Head of caudate nucleus (tissue), 42 donors: ENCODE measurements at regions of chr4 and their contacts with region 1.

Region 1: DNA sequence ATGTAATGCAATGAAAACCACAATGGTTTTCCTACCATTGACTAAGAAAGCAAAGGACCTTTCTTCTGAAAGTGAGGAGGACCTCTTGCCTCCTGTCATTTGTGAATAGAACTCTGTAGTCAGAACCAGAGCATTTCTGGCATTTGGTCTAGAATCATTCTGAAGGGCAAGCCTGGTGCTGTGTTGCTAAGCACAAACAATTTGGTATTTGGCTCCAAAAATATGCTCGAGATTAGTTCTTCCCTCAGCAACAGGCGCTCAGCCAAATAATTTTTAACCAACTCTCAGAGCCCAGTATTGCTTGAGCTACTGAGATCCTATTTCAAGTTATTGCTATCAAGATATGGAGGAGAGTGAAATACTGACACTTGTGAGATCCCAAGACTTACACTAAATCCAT is 71.0 kb downstream of the SNCA start:
- DNase-seq: peak in 2 of 42 donors; percentile 20 to 48

Region 2: DNA sequence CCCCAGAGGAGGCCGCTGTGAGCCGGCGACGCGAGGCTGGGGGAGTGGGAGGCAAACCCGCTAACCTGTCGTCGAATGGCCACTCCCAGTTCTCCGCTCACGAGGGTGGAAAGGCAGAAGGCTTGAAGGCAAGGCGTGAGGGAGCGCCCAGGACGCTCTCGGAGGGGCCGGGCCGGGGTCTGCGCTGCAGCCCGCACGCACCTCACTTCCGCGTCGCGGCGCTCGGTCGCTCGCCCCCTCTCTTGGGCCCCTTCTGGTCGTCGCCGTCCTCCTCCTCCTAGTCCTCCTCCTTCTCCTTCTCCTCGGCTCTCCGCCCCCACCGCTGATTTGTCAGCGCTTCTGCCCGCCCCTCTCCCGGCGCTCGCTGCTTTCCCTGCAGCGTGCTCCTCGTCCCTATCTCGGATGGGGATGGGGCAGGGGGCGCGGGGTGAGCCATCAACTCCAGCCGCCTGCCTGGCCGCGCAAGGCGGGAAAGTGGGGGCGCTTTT is 71.0 kb after region 1 on chr4 and contains the start of gene SNCA:
- intact Hi-C with region 1: loop called (anchors 10 kb)
- DNase-seq: peak; percentile 70 to 96 (median 89)